ENCODE measurements at regions of chr6 and their contacts with region 1.

Region 1: DNA sequence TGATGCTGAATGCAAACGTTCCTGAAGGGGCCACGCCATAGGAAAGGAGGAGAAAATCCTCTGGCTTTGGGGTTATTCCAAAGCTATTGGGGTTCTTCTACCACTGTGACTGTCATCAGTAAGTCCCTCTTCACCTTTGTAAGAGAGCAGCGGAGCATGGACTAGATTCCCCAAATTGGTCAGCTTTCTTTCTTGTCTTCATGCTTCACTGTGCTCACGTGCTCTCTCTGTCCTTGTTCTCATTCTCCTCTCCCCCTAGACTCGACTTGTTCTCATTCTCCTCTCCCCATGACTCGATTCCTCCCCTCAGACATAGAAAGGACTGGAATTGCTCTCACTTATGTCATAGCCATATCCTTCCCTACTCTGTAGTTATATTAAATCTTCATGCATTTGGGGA is 54.8 kb upstream of the ADGRG6 start:
- DNase-seq: no peak

Region 2: GRCh38 chr6:142271476-142271875 is 24.5 kb after region 1 on chr6:
- intact Hi-C with region 1: loop called in 1 of 2 experiments (anchors 1 kb)
- DNase-seq: no peak

Measured in posterior vena cava (tissue), 2 donors.